ENCODE measurements at regions of chr19 and their contacts with region 1.

Region 1: DNA sequence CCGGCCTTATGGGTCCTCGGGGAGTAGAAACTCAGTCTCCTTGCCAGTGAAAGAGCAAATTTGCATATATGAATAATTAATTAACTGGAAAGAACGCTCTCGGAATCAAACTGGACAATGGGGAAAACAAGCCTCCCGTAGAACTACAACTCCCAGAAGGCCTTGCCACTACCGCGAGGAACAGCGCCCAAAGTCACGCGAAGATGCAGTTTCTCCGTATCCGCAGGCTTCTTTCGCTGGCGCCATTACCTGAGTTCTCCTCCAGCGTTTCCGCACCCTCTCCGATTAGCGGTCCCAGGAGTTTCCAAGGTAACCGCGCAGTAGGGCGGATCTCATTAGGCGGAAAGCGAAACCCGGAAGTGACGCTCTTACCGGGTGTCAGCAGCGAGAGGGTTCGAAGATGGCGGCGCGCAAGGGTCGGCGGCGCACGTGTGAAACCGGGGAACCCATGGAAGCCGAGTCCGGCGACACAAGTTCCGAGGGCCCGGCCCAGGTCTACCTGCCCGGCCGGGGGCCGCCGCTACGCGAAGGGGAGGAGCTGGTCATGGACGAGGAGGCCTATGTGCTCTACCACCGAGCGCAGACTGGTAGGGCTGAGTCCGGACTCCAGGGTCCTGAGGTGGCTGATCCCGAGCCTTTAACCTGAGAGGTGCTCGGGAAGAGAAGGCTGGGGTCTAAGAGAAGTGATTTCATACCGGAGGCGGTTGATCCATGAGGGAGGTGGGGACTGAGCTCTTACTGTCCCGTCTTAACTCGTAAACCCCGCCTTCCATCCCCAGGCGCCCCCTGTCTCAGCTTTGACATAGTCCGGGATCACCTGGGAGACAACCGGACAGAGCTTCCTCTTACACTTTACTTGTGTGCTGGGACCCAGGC is at the start of gene GRWD1:
- DNase-seq: peak; percentile 72 to 96
- H3K4me3 ChIP-seq: peak within 1 kb of the TSS; percentile 76 to 81
- H3K27ac ChIP-seq: peak within 1 kb of the TSS; percentile 87 to 89
- H3K4me1 ChIP-seq: peaks cover 3 to 15% of the 10 kb centered on the region in 2 donors
- H3K27me3 ChIP-seq: peaks cover 7% of the 10 kb centered on the region
- CTCF ChIP-seq: no peak
- total RNA-seq, gene GRWD1: 16.0 TPM

Region 2: GRCh38 chr19:48391107-48391986 is 54.5 kb before region 1 on chr19 and contains the start of gene KDELR1:
- intact Hi-C with region 1: loop called (anchors 5 kb)
- DNase-seq: peak in 1 of 2 donors; percentile 80
- H3K4me3 ChIP-seq: peak within 1 kb of the TSS; percentile 85 to 94
- H3K27ac ChIP-seq: peak within 1 kb of the TSS; percentile 91 to 94
- H3K4me1 ChIP-seq: peaks cover 0 to 14% of the 10 kb centered on the region in 2 donors
- H3K27me3 ChIP-seq: peaks cover 28% of the 10 kb centered on the region
- CTCF ChIP-seq: peak; percentile 82 to 94 (median 90)
- total RNA-seq, gene KDELR1: 183 TPM

Region 3: DNA sequence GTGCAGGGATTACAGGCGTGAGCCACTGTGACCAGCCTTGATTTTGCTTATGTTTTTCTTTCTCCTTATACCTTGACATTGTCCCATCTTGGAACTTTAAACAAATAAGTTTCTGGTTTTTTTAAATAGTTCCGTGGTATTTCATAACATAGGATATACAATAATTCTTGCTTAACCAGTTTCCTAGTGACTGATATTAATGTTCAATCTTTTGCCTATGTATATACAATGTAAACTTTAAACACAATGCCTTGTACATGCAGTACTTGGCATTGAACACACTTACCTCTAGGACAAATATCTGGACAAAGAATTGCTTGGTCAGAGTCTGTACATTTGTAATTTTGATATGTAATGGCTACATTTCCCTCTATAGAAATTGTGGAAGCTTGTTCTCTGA is 136.3 kb after region 1 on chr19:
- intact Hi-C with region 1: loop called (anchors 5 kb)
- DNase-seq: no peak
- H3K4me3 ChIP-seq: no peak overlapping the region
- H3K27ac ChIP-seq: no peak overlapping the region
- H3K4me1 ChIP-seq: peaks cover 0 to 3% of the 10 kb centered on the region in 2 donors
- H3K27me3 ChIP-seq: no peaks in the 10 kb centered on the region
- CTCF ChIP-seq: no peak

Region 4: GRCh38 chr19:48618916-48619691 is 173.3 kb after region 1 on chr19 and contains the starts of genes RPL18 and SPHK2:
- intact Hi-C with region 1: loop called (anchors 1 kb)
- DNase-seq: peak; percentile 94 to 99
- H3K4me3 ChIP-seq: peak within 1 kb of the TSS; percentile 68 to 95
- H3K27ac ChIP-seq: peak within 1 kb of the TSS; percentile 86 to 87
- H3K4me1 ChIP-seq: peaks cover 16 to 27% of the 10 kb centered on the region in 2 donors
- H3K27me3 ChIP-seq: no peaks in the 10 kb centered on the region
- CTCF ChIP-seq: no peak
- total RNA-seq, gene RPL18: 2,223 TPM
- total RNA-seq, gene SPHK2: 35.3 TPM